ENCODE measurements at regions of chr1 and their contacts with region 1.

Region 1: GRCh38 chr1:31422505-31423319 is 9.7 kb downstream of the SERINC2 start:
- DNase-seq: peak; percentile 56 to 79 (median 77)
- ATAC-seq: peak; percentile 61 to 84
- H3K4me3 ChIP-seq: no peak overlapping the region
- H3K27ac ChIP-seq: no peak overlapping the region
- H3K4me1 ChIP-seq: no peaks in the 10 kb centered on the region
- H3K27me3 ChIP-seq: no peaks in the 10 kb centered on the region

Region 2: DNA sequence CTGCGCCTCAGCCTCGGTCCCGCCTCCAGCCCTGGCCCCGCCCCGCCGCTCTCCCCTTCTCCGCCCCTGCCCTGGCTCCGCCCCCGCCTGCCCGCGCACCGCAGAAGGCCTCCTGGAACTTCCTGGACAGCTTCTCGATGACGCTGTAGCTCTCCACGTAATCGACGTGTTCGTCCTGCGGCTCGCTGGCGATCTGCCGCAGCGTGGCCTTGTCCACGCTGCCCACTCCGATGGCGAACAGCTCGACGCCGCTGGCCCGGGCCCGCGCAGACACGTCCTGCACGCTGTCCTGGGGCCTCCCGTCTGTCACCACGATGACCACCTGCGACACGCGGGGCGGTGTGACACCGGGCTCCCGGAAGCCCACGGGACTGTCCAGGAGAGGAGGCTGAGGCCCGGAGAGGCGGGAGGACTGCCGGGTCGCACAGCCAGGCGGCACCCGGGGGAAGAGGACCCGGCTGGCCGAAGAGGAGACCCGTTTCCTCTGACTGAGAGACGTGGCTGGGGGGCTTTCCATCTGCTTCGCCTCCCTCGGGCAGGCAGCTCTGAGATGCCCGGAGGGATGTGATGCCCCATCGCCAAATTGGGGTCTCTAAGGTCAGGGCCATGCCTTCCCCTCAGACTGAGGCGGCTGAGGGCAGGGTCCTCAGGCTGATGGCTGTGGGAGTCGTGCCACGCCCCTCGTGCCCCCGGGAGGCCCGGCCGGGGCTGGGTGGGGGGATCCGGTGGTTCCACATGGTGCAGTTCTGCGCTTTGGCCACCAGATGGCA is 703.9 kb before region 1 on chr1:
- intact Hi-C with region 1: loop called in 1 of 4 experiments (anchors 10 kb)
- DNase-seq: peak; percentile 80 to 93 (median 90)
- ATAC-seq: peak; percentile 89
- H3K4me3 ChIP-seq: peak overlapping the region; percentile 19
- H3K27ac ChIP-seq: peak overlapping the region; percentile 96
- H3K4me1 ChIP-seq: no peaks in the 10 kb centered on the region
- H3K27me3 ChIP-seq: no peaks in the 10 kb centered on the region

Region 3: DNA sequence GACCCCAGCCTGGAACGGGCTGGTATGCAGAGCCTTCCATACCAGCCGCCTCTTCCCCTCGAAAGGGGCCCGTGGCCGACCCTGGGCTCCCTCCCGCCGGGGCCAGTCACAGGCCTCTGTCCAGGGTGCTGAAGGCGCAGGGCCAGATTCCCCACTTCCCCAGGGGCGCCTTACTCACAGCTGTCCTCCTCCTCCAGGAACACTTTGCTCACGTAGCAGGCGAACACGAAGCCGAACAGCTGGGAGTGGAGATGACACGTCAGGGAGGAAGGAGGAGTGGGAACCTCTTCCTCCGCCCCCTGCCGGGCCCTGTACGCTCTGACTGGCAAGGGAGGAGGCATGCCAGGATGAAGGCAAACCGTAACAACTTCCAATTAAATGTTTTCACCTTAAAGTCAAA is 240.4 kb before region 1 on chr1:
- intact Hi-C with region 1: loop called (anchors 2 to 5 kb)
- DNase-seq: peak; percentile 81 to 90 (median 90)
- ATAC-seq: peak; percentile 86 to 92
- H3K4me3 ChIP-seq: peak overlapping the region; percentile 16
- H3K27ac ChIP-seq: no peak overlapping the region
- H3K4me1 ChIP-seq: no peaks in the 10 kb centered on the region
- H3K27me3 ChIP-seq: no peaks in the 10 kb centered on the region

Region 4: DNA sequence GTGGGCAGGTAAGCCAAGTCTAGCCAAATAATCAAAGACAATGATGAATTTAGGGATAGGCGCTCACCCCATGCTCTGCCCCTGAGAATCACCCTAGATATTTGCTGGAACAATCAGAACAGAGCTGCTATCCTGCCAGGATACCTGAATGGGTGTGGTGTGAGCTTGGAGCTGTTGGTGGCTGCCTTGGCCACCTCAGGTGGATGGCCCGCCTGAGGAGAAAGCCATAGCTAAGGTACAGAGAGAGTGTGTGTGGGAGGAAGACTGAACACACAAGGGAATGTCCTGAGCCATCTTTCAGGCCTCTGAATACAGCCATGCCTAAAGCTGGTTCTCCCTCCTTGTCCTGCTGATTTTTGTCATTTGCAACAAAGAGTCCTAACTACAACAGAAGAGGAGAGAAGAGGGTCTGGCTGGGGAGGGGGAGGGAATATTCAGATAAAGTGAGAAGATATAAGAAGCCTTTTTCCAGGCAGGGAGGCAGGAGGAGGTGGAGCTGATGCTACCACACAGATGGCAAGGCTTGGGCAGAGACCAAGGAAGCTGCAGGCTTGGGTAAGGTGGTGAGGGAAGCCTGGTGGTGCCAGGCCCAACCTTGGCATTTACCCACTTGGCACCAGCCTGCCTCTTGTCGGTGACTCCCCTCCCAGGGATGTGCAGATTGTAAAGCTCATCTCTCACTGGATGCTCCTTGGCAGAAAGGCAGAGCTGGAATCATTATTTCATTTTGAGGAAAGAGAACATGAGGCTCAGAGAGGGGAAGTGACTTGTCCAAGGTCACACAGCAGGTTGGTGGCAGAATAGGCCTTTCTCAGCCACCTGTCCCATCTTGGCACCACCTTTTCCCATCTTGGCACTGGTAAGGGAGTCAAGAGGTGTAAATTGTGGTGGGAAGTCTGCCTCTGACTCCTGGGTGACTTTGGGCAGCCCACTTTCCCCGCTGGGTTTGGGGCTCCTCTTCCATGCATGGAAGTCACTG is 232.7 kb before region 1 on chr1:
- intact Hi-C with region 1: loop called in 1 of 4 experiments (anchors 5 kb)
- DNase-seq: no peak
- ATAC-seq: no peak
- H3K4me3 ChIP-seq: no peak overlapping the region
- H3K27ac ChIP-seq: no peak overlapping the region
- H3K4me1 ChIP-seq: no peaks in the 10 kb centered on the region
- H3K27me3 ChIP-seq: no peaks in the 10 kb centered on the region

Region 5: DNA sequence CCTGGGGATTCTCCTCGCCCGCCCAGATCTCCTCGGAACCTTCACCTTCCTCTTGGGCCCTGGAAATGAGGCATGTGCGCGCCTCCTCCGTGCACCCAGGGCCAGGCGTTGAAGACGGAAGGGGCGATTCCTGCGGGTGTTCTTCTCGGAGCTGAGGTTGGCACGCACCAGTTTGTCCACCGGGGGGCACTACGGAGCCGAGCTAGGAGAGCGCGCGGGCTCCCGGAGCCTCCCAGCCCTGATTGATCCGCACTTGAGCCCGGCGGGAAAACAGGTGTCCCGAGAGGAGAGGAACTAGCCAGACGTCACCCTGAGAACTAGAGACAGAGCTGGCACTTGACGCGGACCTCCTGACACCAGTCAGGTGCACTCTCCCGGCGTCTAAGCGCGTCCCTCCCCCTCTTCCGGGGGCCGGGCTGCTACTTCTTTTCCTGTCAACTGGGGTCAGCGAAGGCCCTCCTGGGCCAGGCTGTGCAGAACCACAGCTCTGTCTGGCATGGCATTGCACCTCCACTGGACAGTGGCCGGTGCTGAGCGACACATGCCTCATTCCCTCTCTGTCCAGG is 28.0 kb before region 1 on chr1:
- intact Hi-C with region 1: loop called in 1 of 4 experiments (anchors 2 kb)
- DNase-seq: peak; percentile 80 to 93 (median 91)
- ATAC-seq: peak; percentile 89 to 95
- H3K4me3 ChIP-seq: peak overlapping the region; percentile 36
- H3K27ac ChIP-seq: peak overlapping the region; percentile 11
- H3K4me1 ChIP-seq: peaks cover 2% of the 10 kb centered on the region
- H3K27me3 ChIP-seq: no peaks in the 10 kb centered on the region

Region 6: DNA sequence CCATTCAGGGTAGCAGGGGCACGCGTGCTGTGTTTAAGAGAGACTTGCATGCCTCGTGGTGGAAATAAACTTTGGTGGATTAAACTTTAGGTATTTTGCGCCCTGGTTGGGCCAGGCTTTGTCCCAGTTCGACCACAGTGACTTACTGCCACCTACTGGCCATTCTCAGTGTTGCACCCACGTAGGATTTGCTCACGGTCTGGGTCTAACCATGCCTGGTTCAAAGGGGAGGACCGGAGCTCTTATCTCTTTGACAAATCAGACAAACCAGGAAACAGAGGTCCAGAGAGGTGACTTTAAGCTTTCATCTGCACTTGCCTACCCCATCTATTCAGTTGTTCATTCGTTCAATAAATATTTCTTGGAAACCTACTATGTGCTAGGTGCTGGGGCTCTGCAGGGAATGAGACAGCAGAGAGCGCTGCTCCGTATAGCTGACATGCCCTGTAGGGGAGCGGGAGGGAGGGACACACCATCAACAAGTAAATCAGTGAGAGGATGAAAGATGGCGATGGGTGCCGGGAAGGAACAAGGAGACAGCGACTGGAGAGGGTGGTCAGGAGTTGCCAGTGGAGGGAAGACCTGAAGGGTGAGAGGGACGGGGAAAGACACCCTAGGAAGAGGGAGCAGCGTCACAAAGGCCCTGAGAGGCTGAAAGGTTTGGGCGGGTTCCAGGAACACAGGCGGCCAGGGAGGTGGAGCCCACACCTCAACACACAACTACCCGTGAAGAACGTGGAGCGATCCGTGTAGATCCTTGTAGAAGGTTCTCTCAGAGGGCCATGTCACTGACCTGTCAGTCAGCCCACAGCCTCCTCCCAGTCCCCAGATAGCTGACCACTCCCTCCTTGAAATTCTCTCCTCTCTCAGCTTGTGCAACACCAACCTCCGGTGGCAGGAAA is 126.4 kb after region 1 on chr1:
- intact Hi-C with region 1: loop called in 2 of 4 experiments (anchors 10 kb)
- DNase-seq: peak; percentile 77 to 92 (median 86)
- ATAC-seq: peak; percentile 92 to 94
- H3K4me3 ChIP-seq: no peak overlapping the region
- H3K27ac ChIP-seq: no peak overlapping the region
- H3K4me1 ChIP-seq: peaks cover 4% of the 10 kb centered on the region
- H3K27me3 ChIP-seq: no peaks in the 10 kb centered on the region